Activated CD4-positive, alpha-beta memory T cell treated with anti-CD3 and anti-CD28 coated beads, Interleukin-2, amount 10 ng/mL, durations not matched to agents 7 days and 5 days (primary cell): ENCODE measurements at regions of chr10 and their contacts with region 1.

Region 1: GRCh38 chr10:119725828-119726675 is at the start of gene INPP5F:
- DNase-seq: peak; percentile 99
- H3K4me3 Mint-ChIP-seq: peak within 1 kb of the TSS; percentile 86
- H3K27ac Mint-ChIP-seq: peak within 1 kb of the TSS; percentile 71
- H3K4me1 Mint-ChIP-seq: peaks cover 37% of the 10 kb centered on the region
- H3K27me3 Mint-ChIP-seq: peaks cover 2% of the 10 kb centered on the region
- total RNA-seq, gene INPP5F: 11.8 to 15.0 TPM

Region 2: DNA sequence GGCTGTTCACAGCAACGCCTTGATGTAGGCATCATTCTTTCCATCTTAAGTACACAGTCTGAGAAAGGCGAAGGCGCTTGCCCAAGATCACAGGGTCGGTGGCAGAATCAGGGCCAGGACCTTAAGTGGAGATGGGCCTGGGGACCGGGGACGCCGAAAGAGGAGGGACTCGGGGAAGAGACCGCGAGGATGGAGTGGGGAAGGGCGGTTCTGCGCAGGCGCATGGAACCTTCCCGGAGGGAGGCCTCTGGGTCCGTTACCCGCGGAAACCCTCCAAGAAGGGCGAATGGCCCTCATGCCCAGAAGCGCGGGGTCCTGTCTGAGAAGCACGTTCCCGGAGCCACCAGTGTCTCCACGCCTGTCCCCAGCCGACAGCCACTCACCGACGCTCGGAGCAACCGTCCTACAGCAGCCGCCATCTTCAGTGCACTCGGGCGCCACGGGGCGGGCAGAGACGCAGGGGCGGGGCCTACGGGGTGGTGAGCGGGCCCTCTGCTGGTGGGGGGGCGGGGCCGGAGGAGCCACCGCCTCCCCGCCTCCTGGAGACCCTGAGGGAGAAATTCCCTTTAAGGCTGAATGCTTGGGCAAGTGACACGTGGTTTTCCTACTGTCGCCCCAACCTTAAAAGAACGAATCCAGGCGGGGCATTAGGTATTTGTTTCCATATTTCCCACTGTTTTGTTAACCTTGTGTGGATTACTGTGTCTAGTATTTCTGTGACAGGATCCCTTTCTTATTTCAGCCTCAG is 547.5 kb before region 1 on chr10 and contains the start of gene PRDX3:
- CTCF ChIA-PET with region 1: no interaction called
- POLR2A ChIA-PET with region 1: no interaction called
- DNase-seq: peak; percentile 94
- H3K4me3 Mint-ChIP-seq: peak within 1 kb of the TSS; percentile 96
- H3K27ac Mint-ChIP-seq: peak within 1 kb of the TSS; percentile 97
- H3K4me1 Mint-ChIP-seq: peaks cover 41% of the 10 kb centered on the region
- H3K27me3 Mint-ChIP-seq: no peaks in the 10 kb centered on the region
- total RNA-seq, gene PRDX3: 115 to 117 TPM

Region 3: DNA sequence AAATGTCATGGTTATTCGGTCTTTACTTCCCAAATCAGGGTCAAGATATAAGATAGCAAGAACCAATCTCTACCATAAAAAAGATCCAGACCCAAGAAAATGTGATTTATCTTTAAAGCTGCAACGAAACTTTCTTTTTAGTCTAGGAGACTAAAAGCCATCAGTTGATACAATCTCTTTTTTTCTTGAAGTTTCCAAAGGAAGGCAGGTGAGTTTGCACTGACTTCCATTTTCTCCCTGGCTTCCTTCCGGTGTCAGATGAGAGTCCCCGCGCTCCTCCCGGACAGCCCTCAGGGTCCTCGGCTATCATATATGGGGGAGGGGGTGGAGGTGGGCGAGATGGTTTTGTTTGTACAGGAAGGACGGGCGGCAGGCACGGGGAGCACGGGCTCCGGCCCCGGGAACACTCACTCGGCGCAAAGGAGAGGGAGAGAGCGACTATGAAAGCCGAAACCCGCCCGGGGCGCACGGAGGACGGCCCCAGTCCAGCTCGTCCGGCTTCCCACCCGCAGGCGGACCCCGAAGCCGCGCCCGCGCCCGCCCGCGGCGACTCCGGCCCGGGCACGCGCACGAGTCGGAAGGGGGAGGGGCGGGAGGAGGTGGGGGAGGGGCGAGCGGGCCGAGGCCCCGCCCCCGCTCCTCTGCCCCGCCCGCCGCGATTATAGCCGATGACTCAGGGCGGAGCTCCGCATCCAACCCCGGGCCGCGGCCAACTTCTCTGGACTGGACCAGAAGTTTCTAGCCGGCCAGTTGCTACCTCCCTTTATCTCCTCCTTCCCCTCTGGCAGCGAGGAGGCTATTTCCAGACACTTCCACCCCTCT is 75.1 kb before region 1 on chr10 and contains the start of gene BAG3:
- CTCF ChIA-PET with region 1: no interaction called
- POLR2A ChIA-PET with region 1: interaction called, 30 read pairs
- DNase-seq: peak; percentile 86
- H3K4me3 Mint-ChIP-seq: peak within 1 kb of the TSS; percentile 95
- H3K27ac Mint-ChIP-seq: peak within 1 kb of the TSS; percentile 91
- H3K4me1 Mint-ChIP-seq: peaks cover 43% of the 10 kb centered on the region
- H3K27me3 Mint-ChIP-seq: peaks cover 3% of the 10 kb centered on the region
- total RNA-seq, gene BAG3: 26.3 to 27.2 TPM

Region 4: GRCh38 chr10:119686439-119687191 is 39.4 kb before region 1 on chr10:
- CTCF ChIA-PET with region 1: interaction called, 27 read pairs
- POLR2A ChIA-PET with region 1: interaction called, 23 read pairs
- DNase-seq: peak; percentile 79
- H3K4me3 Mint-ChIP-seq: peak overlapping the region; percentile 30
- H3K27ac Mint-ChIP-seq: peak overlapping the region; percentile 36
- H3K4me1 Mint-ChIP-seq: peaks cover 29% of the 10 kb centered on the region
- H3K27me3 Mint-ChIP-seq: peaks cover 5% of the 10 kb centered on the region

Region 5: DNA sequence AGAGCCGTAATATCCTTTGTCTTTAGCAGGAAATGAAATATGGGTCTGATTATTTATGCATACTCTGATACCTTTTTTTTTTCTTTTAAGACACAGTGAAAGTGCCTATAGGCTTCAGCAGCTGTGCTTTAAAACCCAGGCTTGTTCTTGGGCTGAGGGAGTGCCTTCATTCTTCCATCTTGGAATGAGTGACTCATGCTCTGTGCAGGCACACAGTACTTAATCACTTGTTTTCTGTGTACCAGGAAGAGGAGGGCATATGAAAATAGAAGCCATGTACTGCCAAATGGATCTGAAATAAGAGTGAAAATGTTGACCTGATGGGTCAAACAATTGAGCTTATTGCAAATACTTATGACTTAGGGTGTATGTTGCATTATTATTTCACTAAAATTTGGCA is 11.8 kb after region 1 on chr10:
- CTCF ChIA-PET with region 1: interaction called, 11 read pairs
- POLR2A ChIA-PET with region 1: interaction called, 24 read pairs
- DNase-seq: no peak
- H3K4me3 Mint-ChIP-seq: no peak overlapping the region
- H3K27ac Mint-ChIP-seq: no peak overlapping the region
- H3K4me1 Mint-ChIP-seq: peaks cover 15% of the 10 kb centered on the region
- H3K27me3 Mint-ChIP-seq: no peaks in the 10 kb centered on the region

Region 6: DNA sequence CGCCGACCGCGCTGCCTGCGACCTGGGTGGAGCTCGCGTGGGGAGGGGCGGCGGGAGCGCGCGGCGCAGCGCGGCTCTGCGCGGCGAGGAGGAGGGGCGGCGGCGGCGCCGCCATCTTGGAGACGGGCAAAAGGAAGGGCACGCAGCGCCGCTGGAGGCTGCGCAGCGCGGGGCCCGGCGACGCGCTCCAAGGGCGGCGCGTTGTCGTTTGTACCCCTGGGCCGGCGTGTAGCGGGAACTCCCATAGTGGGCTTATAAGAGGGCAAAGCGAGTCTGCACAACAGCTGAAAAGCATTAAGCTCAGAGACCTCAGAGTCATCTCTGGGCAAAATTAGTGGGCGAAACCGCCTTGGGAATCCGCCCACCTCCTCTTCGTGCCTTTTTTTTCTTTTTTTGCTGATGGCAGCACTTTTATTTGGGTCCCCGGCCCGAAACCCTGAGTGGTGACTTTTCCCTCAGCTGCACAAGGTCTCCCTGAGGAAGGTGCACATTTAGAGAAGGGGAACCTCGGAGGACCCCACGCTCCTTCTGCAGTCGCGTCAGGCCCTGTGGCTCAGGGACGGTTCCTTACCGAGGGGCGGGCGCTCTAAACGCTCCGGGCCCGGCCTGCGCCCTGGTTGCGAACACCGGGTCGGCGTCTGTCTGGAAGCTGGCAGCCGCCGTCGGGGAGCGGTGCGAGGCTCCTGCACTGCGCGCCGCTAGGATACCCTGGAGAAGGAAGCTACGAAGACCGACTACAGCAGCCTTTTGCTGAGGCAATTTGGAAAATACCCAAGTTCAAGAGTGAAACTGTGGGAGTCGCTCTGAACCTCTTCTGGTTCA is 147.0 kb after region 1 on chr10:
- CTCF ChIA-PET with region 1: interaction called, 5 read pairs
- POLR2A ChIA-PET with region 1: interaction called, 26 read pairs
- DNase-seq: peak; percentile 91
- H3K4me3 Mint-ChIP-seq: peak overlapping the region; percentile 78
- H3K27ac Mint-ChIP-seq: peak overlapping the region; percentile 82
- H3K4me1 Mint-ChIP-seq: peaks cover 35% of the 10 kb centered on the region
- H3K27me3 Mint-ChIP-seq: no peaks in the 10 kb centered on the region